ENCODE measurements at regions of chr10 and their contacts with region 1.

Region 1: DNA sequence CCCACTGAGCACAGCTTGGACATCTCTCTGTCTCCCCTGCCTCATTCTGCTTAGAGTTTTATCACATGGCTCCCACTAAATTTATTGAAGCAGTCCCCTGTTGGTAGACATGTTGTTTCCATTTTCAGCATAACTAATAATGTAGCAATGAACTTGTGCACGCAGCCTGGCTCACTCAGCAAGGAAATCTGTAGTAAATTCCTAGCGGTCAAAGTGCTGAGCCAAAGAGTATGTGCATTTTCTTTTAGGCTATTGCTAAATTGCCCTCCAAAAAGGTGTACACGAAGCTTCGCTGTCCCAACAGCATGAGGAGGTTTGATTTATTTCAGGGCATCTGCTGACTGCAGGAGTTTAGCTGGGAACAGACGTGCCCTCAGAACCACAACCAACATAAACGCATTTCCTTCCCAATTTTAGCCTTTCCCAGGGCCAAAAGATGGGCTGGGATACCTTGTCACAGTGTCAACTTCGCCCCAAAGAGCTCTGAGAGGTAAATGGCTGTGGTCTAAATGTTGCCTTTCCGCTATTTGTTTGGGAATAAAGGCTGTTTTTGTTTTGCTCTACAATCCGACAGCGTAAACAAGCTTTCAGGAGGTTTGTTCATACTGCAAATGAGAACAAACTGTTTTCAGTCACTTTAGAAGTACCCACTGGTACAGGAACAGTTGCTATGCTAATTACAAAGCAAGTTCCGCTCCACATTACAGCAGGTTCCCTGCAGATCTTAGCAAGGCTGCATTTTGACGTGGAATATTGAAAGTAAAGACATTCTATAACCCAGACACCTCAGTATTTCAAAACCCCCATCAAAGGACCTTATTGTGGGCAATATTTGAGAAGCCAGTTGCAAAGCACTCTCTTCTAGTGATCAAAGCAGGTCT is 16.8 kb downstream of the VSIR start:
- DNase-seq: no peak
- ATAC-seq: no peak
- H3K4me3 Mint-ChIP-seq: no peak overlapping the region
- H3K27ac Mint-ChIP-seq: no peak overlapping the region
- H3K4me1 Mint-ChIP-seq: peaks cover 18% of the 10 kb centered on the region
- H3K27me3 Mint-ChIP-seq: no peaks in the 10 kb centered on the region
- CTCF ChIP-seq: no peak

Region 2: GRCh38 chr10:71812016-71812912 is 55.7 kb after region 1 on chr10:
- CTCF ChIA-PET with region 1: interaction called, 11 read pairs
- POLR2A ChIA-PET with region 1: no interaction called
- DNase-seq: peak; percentile 74
- ATAC-seq: peak; percentile 76
- H3K4me3 Mint-ChIP-seq: no peak overlapping the region
- H3K27ac Mint-ChIP-seq: no peak overlapping the region
- H3K4me1 Mint-ChIP-seq: no peaks in the 10 kb centered on the region
- H3K27me3 Mint-ChIP-seq: no peaks in the 10 kb centered on the region
- CTCF ChIP-seq: peak; percentile 53